Activated CD4-positive, alpha-beta T cell treated with anti-CD3 and anti-CD28 coated beads, Interleukin-2, amount 10 ng/mL, durations not matched to agents 7 days and 5 days (primary cell): ENCODE measurements at regions of chr1 and their contacts with region 1.

Region 1: GRCh38 chr1:27940297-27940696 is 5.5 kb downstream of the SMPDL3B start:
- DNase-seq: peak; percentile 81
- H3K4me3 Mint-ChIP-seq: no peak overlapping the region
- H3K27ac Mint-ChIP-seq: peak overlapping the region; percentile 26
- H3K4me1 Mint-ChIP-seq: peaks cover 58% of the 10 kb centered on the region
- H3K27me3 Mint-ChIP-seq: peaks cover 8% of the 10 kb centered on the region

Region 2: GRCh38 chr1:27952147-27952546 is 11.8 kb after region 1 on chr1:
- CTCF ChIA-PET with region 1: interaction called, 11 read pairs
- POLR2A ChIA-PET with region 1: no interaction called
- DNase-seq: no peak
- H3K4me3 Mint-ChIP-seq: no peak overlapping the region
- H3K27ac Mint-ChIP-seq: no peak overlapping the region
- H3K4me1 Mint-ChIP-seq: no peaks in the 10 kb centered on the region
- H3K27me3 Mint-ChIP-seq: no peaks in the 10 kb centered on the region

Region 3: DNA sequence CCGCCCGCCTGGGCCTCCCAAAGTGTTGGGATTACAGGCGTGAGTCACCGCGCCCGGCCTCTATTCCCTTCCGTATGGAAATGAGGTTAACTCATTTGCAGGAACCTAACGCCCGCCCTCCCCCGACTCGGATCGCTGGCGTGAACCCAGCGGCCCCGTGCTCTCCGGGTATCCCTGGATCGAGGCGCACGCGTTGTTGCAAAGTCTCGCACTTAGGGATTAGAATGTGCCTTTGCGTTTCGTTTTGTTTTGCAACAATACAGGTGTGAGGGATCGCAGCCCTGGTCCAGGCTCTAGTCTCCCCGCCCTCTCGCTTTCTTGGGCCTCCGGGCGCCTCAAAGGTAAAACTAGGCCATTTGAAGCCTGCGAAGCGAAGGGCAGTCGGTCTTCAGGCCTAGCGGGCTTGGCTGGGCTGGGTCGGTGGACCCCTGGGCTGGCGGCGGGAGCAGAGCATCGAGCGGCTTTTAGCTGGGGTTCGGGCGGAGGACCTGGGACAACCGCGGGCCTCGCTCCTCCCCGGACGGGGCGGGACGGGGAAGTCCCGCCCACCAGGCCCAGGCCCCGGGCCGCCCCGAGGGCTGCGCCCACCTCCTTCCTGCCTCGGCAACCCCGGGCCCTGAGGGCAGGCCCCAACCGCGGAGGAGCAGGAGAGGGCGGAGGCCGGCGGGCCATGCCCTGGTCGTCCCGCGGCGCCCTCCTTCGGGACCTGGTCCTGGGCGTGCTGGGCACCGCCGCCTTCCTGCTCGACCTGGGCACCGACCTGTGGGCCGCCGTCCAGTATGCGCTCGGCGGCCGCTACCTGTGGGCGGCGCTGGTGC is 19.3 kb after region 1 on chr1 and contains the start of gene XKR8:
- CTCF ChIA-PET with region 1: interaction called, 15 read pairs
- POLR2A ChIA-PET with region 1: no interaction called
- DNase-seq: peak; percentile 86
- H3K4me3 Mint-ChIP-seq: peak within 1 kb of the TSS; percentile 79
- H3K27ac Mint-ChIP-seq: peak within 1 kb of the TSS; percentile 88
- H3K4me1 Mint-ChIP-seq: peaks cover 32% of the 10 kb centered on the region
- H3K27me3 Mint-ChIP-seq: no peaks in the 10 kb centered on the region
- total RNA-seq, gene XKR8: 7.6 to 7.8 TPM

Region 4: GRCh38 chr1:27979151-27979858 is 39.0 kb after region 1 on chr1:
- CTCF ChIA-PET with region 1: no interaction called
- POLR2A ChIA-PET with region 1: no interaction called
- DNase-seq: peak; percentile 45
- H3K4me3 Mint-ChIP-seq: no peak overlapping the region
- H3K27ac Mint-ChIP-seq: no peak overlapping the region
- H3K4me1 Mint-ChIP-seq: peaks cover 3% of the 10 kb centered on the region
- H3K27me3 Mint-ChIP-seq: no peaks in the 10 kb centered on the region